ENCODE measurements at regions of chr3 and their contacts with region 1.

Region 1: GRCh38 chr3:154120961-154121700 is at the start of gene ARHGEF26:
- DNase-seq: peak; percentile 88 to 97
- H3K4me3 ChIP-seq: peak within 1 kb of the TSS; percentile 88
- CTCF ChIP-seq: no peak
- POLR2A ChIP-seq: no peak
- total RNA-seq, gene ARHGEF26: 29.6 to 36.8 (median 33.1) TPM

Region 2: GRCh38 chr3:154214306-154214705 is 93.2 kb after region 1 on chr3:
- intact Hi-C with region 1: loop called (anchors 10 kb)
- DNase-seq: no peak
- H3K4me3 ChIP-seq: no peak overlapping the region
- CTCF ChIP-seq: no peak
- POLR2A ChIP-seq: no peak

Region 3: DNA sequence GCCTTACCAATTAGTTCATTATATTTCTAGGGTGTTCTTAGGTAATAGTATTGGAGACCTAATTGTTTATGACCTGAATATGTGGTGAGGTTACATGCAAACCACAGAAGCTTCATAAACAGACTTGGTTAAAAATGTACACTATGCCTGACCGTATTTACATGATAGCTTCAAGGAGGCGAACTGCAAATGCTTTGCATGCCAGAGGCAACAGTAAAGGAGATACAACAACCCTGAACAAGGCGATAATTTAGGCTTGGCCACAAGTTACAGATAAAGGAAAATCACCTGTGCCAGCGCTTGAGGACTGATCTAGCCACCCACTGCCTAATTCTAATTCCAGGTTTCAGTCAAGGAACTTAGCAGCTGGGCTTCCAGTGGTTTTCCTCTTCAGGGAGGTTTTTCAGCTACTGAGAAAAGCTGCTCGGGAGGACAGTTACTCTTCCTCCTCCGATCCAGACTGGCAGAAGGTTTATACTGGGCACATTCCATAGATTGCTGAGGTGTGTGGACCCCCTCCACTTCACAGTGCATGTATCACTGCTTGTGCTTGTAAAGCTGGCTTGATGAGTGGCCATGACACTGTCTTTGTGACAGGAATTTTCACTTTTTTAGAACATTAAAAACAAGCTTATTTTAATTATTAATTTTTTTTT is 107.6 kb after region 1 on chr3:
- intact Hi-C with region 1: no loop called
- DNase-seq: no peak
- H3K4me3 ChIP-seq: no peak overlapping the region
- CTCF ChIP-seq: no peak
- POLR2A ChIP-seq: no peak

Region 4: DNA sequence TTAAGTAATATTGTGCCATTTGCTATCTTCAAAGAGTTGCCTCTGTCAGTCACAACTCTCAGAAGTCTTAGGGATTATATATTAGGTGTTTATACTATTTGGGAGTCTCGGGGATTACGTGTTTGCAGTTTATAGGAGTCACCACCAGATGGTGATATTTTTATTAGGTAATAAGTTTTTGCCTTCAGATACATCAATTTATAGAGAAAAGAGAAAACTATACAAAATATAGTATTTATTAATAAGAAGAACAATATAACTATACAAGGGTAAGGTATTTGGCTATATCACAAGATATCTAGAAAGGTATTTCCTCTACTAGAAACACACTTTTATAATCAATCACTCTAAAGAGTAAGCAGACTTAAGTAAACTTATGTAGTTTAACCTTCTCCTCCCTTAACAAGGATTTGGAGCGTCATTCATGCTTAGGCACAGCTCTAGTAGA is 213.9 kb after region 1 on chr3:
- intact Hi-C with region 1: no loop called
- DNase-seq: no peak
- H3K4me3 ChIP-seq: no peak overlapping the region
- CTCF ChIP-seq: no peak
- POLR2A ChIP-seq: no peak

Measured in lower leg skin (tissue), 4 donors.